ENCODE measurements at regions of chr18 and their contacts with region 1.

Region 1: DNA sequence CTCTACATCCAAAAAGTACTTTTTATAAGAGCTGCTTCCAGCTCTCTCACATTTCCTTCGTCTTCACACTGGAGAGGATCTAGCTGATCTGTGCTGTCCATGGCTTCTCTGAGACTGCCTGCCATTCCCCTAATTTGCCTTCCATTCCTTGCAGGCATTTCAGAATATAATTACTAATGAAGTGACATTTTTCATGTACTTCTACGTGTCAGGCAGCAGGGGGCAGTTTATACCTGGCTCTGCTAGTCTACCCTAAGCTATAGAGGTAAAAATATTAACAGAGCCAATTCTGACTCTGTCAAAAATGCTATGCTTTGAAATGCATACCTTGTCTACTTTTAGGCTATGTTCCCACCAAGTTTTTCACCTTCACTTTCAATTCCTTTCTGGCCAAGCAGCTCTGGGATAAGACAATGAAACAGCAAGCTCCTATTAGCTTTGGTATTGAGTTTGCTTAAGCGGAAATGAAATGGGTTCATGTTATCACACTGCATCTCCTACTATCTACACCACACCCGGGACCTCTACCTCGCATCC is 81.9 kb downstream of the MEP1B start:
- DNase-seq: peak; percentile 31
- ATAC-seq: peak; percentile 88
- H3K4me3 Mint-ChIP-seq: no peak overlapping the region
- H3K27ac Mint-ChIP-seq: peak overlapping the region; percentile 10; the same call in 1 of the 2 replicates
- H3K4me1 Mint-ChIP-seq: peaks cover 19% of the 10 kb centered on the region
- H3K27me3 Mint-ChIP-seq: no peaks in the 10 kb centered on the region
- CTCF ChIP-seq: no peak

Region 2: GRCh38 chr18:32255570-32255969 is 16.2 kb before region 1 on chr18:
- CTCF ChIA-PET with region 1: interaction called, 11 read pairs
- POLR2A ChIA-PET with region 1: no interaction called
- DNase-seq: no peak
- ATAC-seq: no peak
- H3K4me3 Mint-ChIP-seq: no peak overlapping the region
- H3K27ac Mint-ChIP-seq: no peak overlapping the region
- H3K4me1 Mint-ChIP-seq: peaks cover 24% of the 10 kb centered on the region
- H3K27me3 Mint-ChIP-seq: no peaks in the 10 kb centered on the region
- CTCF ChIP-seq: no peak

Region 3: DNA sequence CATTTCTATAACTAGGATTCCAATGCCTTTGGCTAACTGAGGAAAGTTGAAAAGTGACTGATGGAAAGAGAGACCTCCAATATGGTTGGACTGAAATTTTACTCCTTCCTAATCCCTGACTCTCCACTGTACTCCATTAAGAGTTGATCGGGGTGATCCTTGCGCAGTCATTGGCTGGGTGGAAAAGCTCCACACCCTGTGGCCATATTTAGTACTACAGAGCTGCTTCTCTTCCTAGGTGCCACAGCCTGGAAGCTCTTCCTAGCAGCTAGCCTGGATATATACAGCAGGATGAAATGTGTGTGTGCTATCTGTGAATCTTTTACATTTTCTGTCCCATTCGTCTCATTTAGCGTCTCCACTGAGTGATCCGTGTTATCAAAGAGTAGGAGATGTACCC is 10.7 kb before region 1 on chr18:
- CTCF ChIA-PET with region 1: interaction called, 11 read pairs
- POLR2A ChIA-PET with region 1: no interaction called
- DNase-seq: no peak
- ATAC-seq: peak; percentile 93
- H3K4me3 Mint-ChIP-seq: no peak overlapping the region
- H3K27ac Mint-ChIP-seq: no peak overlapping the region
- H3K4me1 Mint-ChIP-seq: no peaks in the 10 kb centered on the region
- H3K27me3 Mint-ChIP-seq: no peaks in the 10 kb centered on the region
- CTCF ChIP-seq: no peak

Region 4: DNA sequence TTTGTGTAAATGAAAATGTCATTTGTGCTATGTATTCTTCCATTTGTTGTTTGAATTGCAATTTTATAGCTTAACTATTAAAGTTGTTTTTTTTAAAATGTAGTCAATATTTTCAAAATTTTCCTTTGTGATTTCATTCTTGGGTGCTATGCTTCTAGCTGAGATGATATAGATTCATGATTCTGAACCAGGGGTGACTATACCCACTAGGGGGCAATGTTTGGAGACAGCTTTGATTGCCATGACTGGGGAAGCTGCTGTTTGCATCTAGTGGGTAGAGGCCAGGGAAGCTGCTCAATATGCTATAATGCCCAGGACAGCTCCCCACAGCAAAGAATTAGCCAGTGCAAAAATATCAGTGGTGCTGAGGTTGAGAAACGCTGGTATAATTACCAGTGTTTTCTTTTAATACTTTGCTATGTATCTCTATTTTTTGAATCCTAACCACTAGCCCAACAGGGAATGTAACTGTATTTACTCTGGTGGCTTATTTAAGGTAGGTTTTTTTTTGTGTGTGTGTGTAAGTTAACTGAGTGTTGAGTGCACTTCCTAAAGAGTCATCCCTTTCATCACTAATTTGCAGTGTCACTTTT is 17.8 kb after region 1 on chr18:
- CTCF ChIA-PET with region 1: interaction called, 32 read pairs
- POLR2A ChIA-PET with region 1: no interaction called
- DNase-seq: peak; percentile 59
- ATAC-seq: peak; percentile 89
- H3K4me3 Mint-ChIP-seq: no peak overlapping the region
- H3K27ac Mint-ChIP-seq: no peak overlapping the region
- H3K4me1 Mint-ChIP-seq: peaks cover 8% of the 10 kb centered on the region
- H3K27me3 Mint-ChIP-seq: no peaks in the 10 kb centered on the region
- CTCF ChIP-seq: peak; percentile 49; the same call in 1 of the 2 replicates

Region 5: GRCh38 chr18:32470713-32471633 is 199.2 kb after region 1 on chr18 and contains the start of gene GAREM1:
- CTCF ChIA-PET with region 1: interaction called, 38 read pairs
- POLR2A ChIA-PET with region 1: interaction called, 7 read pairs
- DNase-seq: peak; percentile 91
- ATAC-seq: peak; percentile 89
- H3K4me3 Mint-ChIP-seq: peak within 1 kb of the TSS; percentile 93
- H3K27ac Mint-ChIP-seq: peak within 1 kb of the TSS; percentile 89
- H3K4me1 Mint-ChIP-seq: peaks cover 30% of the 10 kb centered on the region
- H3K27me3 Mint-ChIP-seq: peaks cover 29% of the 10 kb centered on the region
- CTCF ChIP-seq: no peak
- total RNA-seq, gene GAREM1: 7.0 to 7.7 TPM (median 7.4 TPM) in 3 replicates

Region 6: GRCh38 chr18:33146014-33146413 is 874.3 kb after region 1 on chr18:
- CTCF ChIA-PET with region 1: no interaction called
- POLR2A ChIA-PET with region 1: no interaction called
- DNase-seq: no peak
- ATAC-seq: no peak
- H3K4me3 Mint-ChIP-seq: no peak overlapping the region
- H3K27ac Mint-ChIP-seq: no peak overlapping the region
- H3K4me1 Mint-ChIP-seq: no peaks in the 10 kb centered on the region
- H3K27me3 Mint-ChIP-seq: no peaks in the 10 kb centered on the region
- CTCF ChIP-seq: no peak

Measured in WTC11 (cell line).